ENCODE measurements at regions of chr9 and their contacts with region 1.

Region 1: DNA sequence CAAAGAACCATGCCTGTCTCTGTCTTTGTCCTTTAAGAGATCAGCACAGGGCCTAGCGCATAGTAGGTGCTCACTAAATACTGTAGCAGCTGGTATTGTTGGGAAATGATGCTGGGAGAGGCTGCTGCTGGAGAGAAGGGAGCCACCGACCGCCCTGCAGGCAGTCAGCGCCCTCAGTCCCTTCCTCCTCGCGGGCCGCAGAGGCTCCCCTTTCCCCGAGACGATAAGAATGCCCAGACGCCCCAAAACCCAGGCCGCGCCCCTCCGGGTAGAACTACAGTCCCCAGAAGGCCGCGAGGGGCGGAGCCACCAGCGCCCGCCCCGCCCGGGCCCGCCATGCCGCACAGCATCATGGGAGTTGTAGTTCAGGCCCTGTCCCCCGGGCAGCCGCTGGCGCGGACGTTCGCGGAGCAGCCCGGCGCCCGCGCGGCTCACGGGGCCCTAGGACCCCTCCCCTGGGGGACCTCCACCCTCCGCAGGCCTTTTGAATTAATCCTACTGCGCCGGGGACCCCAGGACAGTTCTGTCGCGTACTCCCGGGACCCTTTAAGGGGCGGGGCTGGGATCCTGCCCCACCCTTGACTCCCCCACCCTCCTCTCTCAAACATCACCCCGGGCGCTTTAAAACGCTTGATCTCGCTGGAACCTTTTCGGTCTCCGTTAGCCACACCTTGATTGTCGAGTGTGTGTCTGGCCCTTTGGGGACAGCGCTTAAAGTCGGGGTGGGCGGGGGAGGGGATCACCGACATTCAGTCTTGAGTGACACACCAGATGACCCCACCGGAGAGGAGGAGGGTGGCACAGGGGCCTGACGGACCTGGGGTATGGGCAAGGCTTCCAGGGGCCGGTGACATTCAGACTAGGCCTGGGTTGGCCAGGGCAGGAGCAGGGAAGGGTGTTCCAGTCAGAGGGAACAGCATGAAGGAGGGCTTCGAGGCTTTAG is 24.8 kb upstream of the IER5L start:
- DNase-seq: peak; percentile 92
- H3K4me3 Mint-ChIP-seq: peak overlapping the region; percentile 64
- H3K27ac Mint-ChIP-seq: no peak overlapping the region
- H3K4me1 Mint-ChIP-seq: peaks cover 11% of the 10 kb centered on the region
- H3K27me3 Mint-ChIP-seq: peaks cover 7% of the 10 kb centered on the region

Region 2: DNA sequence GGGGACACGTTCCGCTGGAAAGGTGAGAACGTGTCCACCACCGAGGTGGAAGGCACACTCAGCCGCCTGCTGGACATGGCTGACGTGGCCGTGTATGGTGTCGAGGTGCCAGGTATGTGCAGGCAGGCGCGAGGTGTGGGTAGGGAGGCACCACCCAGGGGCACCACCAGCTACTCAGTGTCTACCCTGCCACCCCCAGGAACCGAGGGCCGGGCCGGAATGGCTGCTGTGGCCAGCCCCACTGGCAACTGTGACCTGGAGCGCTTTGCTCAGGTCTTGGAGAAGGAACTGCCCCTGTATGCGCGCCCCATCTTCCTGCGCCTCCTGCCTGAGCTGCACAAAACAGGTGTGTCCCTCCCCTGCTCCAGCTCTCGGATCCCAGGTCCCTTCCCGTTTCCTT is 847.4 kb before region 1 on chr9:
- CTCF ChIA-PET with region 1: no interaction called
- POLR2A ChIA-PET with region 1: no interaction called
- intact Hi-C with region 1: no loop called
- DNase-seq: no peak
- H3K4me3 Mint-ChIP-seq: no peak overlapping the region
- H3K27ac Mint-ChIP-seq: no peak overlapping the region
- H3K4me1 Mint-ChIP-seq: no peaks in the 10 kb centered on the region
- H3K27me3 Mint-ChIP-seq: no peaks in the 10 kb centered on the region

Region 3: GRCh38 chr9:129237195-129237611 is 34.3 kb after region 1 on chr9:
- CTCF ChIA-PET with region 1: no interaction called
- POLR2A ChIA-PET with region 1: no interaction called
- intact Hi-C with region 1: loop called (anchors 5 kb)
- DNase-seq: peak; percentile 77
- H3K4me3 Mint-ChIP-seq: peak overlapping the region; percentile 68
- H3K27ac Mint-ChIP-seq: peak overlapping the region; percentile 88
- H3K4me1 Mint-ChIP-seq: peaks cover 49% of the 10 kb centered on the region
- H3K27me3 Mint-ChIP-seq: no peaks in the 10 kb centered on the region

Measured in activated CD4-positive, alpha-beta memory T cell treated with anti-CD3 and anti-CD28 coated beads for 36 hours (primary cell).